ENCODE measurements at regions of chr2 and their contacts with region 1.

Region 1: GRCh38 chr2:42342061-42342794 is 18.8 kb downstream of the COX7A2L start:
- DNase-seq: peak; percentile 79 to 89
- H3K4me3 ChIP-seq: no peak overlapping the region
- H3K27ac ChIP-seq: peak overlapping the region; percentile 10; the same call in 1 of the 2 replicates
- H3K4me1 ChIP-seq: peaks cover 18% of the 10 kb centered on the region
- H3K27me3 ChIP-seq: no peaks in the 10 kb centered on the region
- CTCF ChIP-seq: no peak

Region 2: DNA sequence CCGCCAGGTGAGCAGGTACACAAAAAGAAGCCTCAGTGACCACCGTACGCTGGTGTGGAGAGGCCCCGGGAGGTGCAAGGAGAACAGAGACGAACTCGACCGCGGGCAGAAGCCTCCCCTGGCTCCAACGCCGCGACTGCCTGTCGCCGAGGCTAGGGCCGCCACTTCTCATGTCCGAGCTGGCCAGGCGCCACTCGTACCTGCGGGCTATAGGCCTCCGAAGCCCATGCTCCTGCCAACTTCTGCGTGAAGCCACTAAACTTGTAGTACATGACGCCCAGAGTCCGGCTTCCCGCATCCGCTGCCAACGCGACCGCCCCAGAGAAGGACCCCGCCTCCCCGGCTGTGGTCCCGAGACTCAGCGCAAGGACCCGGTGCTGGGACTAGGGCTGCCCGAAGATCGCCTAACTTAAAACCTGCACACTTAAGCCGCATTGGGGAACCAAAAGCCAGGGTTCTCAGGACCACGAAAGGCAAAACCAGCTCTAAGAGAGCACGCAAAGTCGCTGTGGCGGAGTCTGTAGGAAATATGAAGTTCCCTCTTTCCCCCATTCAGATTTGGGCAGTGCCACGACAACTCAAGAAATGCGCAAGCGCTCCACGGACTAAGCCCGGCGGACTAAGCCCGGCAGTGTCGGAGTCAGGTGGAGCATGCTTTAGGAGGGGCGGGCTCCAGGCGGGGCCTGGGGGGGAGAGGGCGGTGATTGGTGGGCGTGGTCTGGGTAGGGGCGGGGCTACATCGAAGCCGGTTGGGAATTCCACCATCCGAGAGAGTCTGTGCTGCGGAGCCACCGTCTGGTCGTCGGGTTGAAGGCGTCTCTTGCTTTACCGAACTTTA is 18.9 kb after region 1 on chr2 and contains the start of gene COX7A2L:
- CTCF ChIA-PET with region 1: interaction called, 9 read pairs
- POLR2A ChIA-PET with region 1: interaction called, 7 read pairs
- intact Hi-C with region 1: loop called (anchors 1 kb)
- DNase-seq: peak; percentile 91 to 97
- H3K4me3 ChIP-seq: peak within 1 kb of the TSS; percentile 89
- H3K27ac ChIP-seq: peak within 1 kb of the TSS; percentile 75
- H3K4me1 ChIP-seq: peaks cover 27% of the 10 kb centered on the region
- H3K27me3 ChIP-seq: no peaks in the 10 kb centered on the region
- CTCF ChIP-seq: no peak
- total RNA-seq, gene COX7A2L: 141 and 144 TPM in 2 replicates

Region 3: DNA sequence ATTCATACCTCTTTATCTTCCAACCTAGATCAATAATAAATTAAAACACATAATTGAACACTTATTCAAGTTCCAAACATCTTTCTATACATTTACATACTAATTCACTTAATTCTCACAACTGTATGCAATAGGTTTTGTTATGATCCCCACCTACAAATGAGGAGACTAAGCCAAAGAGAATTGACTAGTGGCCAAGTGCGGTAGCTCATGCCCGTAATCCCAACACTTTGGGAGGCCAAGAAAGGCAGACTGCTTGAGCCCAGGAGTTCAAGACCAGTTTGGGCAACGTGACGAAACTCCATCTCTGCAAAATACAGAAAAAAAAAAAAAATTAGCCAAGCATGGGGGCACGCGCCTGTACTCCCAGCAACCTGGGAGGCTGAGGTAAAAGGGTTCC is 114.8 kb after region 1 on chr2:
- CTCF ChIA-PET with region 1: no interaction called
- POLR2A ChIA-PET with region 1: no interaction called
- intact Hi-C with region 1: no loop called
- DNase-seq: no peak
- H3K4me3 ChIP-seq: no peak overlapping the region
- H3K27ac ChIP-seq: no peak overlapping the region
- H3K4me1 ChIP-seq: no peaks in the 10 kb centered on the region
- H3K27me3 ChIP-seq: no peaks in the 10 kb centered on the region
- CTCF ChIP-seq: peak; percentile 39; the same call in 1 of the 2 replicates